WTC11 (cell line): ENCODE measurements at regions of chr15 and their contacts with region 1.

Region 1: GRCh38 chr15:68672781-68673205 is 94.0 kb downstream of the CORO2B start:
- DNase-seq: peak; percentile 49
- ATAC-seq: peak; percentile 71
- H3K4me3 Mint-ChIP-seq: no peak overlapping the region
- H3K27ac Mint-ChIP-seq: no peak overlapping the region
- H3K4me1 Mint-ChIP-seq: peaks cover 11% of the 10 kb centered on the region
- H3K27me3 Mint-ChIP-seq: no peaks in the 10 kb centered on the region
- CTCF ChIP-seq: no peak

Region 2: DNA sequence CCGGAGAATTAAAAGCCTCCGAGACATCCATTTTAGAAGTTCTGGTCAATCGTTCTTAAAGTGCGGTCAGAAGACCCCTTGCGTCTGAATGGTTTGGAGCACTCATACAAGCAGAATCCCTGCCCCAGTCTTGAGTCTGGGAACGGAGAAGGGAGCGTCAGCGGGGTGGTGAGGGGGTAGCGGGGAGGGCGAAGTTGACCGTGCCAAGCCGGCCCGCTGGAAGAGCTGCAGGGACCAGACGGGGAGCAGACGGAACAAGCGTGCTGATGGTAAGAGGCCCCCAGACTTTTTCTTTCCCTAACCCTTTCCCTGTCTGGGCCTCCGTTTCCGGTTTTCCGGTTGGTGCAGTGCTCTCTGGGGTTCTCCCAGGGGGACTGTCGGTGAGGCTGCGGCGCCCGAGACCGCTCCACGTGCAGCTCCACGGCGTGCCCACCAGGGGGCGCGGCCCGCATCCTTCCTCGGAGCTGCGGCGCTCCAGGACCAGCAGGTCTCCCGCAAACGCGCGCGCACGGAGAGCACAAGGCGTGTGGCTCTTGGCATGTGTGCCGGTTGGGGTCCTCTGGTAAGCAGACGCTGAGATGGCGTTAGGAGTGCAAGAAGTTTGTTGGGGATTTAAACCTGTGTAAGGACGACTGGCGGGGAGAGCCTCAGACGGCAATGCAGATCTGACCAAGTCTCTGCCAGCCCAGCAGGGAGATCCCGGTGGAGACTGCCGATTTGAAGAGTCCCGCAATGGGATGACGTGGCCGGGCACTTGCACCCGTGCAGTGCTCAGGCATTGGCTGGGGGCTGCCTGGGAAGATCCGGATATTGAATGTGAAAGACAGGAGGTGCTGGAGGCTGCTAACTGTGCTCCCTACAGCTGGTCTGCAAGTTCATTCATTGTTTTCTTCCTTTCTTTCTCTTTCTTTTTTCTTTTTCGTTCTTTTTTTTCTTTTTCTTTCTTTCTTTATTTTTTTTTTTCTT is 113.2 kb before region 1 on chr15:
- CTCF ChIA-PET with region 1: interaction called, 174 read pairs
- POLR2A ChIA-PET with region 1: interaction called, 3 read pairs
- DNase-seq: peak; percentile 89
- ATAC-seq: peak; percentile 85
- H3K4me3 Mint-ChIP-seq: peak overlapping the region; percentile 94
- H3K27ac Mint-ChIP-seq: peak overlapping the region; percentile 72
- H3K4me1 Mint-ChIP-seq: peaks cover 29% of the 10 kb centered on the region
- H3K27me3 Mint-ChIP-seq: peaks cover 20% of the 10 kb centered on the region
- CTCF ChIP-seq: peak; percentile 91

Region 3: GRCh38 chr15:68599560-68600071 is 73.2 kb before region 1 on chr15:
- CTCF ChIA-PET with region 1: interaction called, 11 read pairs
- POLR2A ChIA-PET with region 1: no interaction called
- DNase-seq: peak; percentile 80
- ATAC-seq: peak; percentile 83
- H3K4me3 Mint-ChIP-seq: peak overlapping the region; percentile 20; the same call in 1 of the 2 replicates
- H3K27ac Mint-ChIP-seq: no peak overlapping the region
- H3K4me1 Mint-ChIP-seq: peaks cover 62% of the 10 kb centered on the region
- H3K27me3 Mint-ChIP-seq: peaks cover 8% of the 10 kb centered on the region
- CTCF ChIP-seq: no peak

Region 4: DNA sequence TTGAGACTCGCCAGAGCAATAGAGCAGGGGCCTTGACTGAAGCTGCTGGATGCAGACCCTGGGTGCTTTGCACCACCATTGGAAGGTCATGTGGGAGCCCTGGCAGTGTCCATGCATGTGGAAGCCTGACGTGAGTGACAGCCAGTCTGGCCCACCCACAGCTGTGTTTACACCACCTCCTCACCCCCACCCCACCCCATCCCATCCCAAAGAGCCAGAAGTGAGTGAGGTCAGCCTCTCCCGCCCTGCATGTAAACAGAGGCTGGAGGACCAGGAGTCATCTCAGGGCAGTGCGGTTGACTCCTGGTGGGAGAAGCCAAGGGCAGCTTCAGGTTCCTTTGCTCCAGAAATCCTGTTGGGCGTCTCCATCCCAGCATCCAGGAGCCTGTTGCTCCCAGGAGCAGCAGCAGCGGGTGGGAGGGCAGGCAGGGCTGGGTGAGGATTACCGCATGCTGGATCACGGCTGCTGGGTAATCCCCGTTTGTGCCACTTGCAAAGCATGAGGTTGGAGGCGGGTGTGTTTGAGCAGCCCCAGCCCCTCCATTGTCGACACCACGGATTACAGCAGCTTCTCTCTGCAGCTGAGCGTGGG is 49.4 kb before region 1 on chr15:
- CTCF ChIA-PET with region 1: interaction called, 26 read pairs
- POLR2A ChIA-PET with region 1: no interaction called
- DNase-seq: no peak
- ATAC-seq: no peak
- H3K4me3 Mint-ChIP-seq: no peak overlapping the region
- H3K27ac Mint-ChIP-seq: no peak overlapping the region
- H3K4me1 Mint-ChIP-seq: peaks cover 24% of the 10 kb centered on the region
- H3K27me3 Mint-ChIP-seq: no peaks in the 10 kb centered on the region
- CTCF ChIP-seq: no peak

Region 5: GRCh38 chr15:68658151-68658550 is 14.6 kb before region 1 on chr15:
- CTCF ChIA-PET with region 1: interaction called, 120 read pairs
- POLR2A ChIA-PET with region 1: no interaction called
- DNase-seq: no peak
- ATAC-seq: no peak
- H3K4me3 Mint-ChIP-seq: no peak overlapping the region
- H3K27ac Mint-ChIP-seq: no peak overlapping the region
- H3K4me1 Mint-ChIP-seq: peaks cover 29% of the 10 kb centered on the region
- H3K27me3 Mint-ChIP-seq: no peaks in the 10 kb centered on the region
- CTCF ChIP-seq: no peak

Region 6: DNA sequence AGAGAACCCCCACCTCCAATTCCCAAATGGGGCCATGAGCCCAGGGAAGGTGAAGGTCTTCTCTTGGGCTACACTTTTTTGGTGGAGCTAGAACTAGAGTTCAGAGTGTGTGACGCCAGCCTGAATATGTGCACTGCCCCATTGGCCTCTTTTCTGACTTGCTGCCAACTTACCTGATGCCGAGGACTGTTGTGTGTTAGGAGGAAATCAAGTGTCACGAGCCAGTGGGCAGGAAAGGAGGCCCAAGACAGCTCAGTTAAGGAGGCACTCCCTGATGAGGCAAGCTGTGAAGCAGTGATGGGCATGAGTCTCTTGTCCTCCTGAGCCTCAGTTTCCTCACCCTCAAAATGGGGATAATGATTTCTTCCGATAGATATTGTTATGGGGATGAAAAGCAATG is 40.1 kb after region 1 on chr15:
- CTCF ChIA-PET with region 1: interaction called, 15 read pairs
- POLR2A ChIA-PET with region 1: no interaction called
- DNase-seq: no peak
- ATAC-seq: no peak
- H3K4me3 Mint-ChIP-seq: no peak overlapping the region
- H3K27ac Mint-ChIP-seq: no peak overlapping the region
- H3K4me1 Mint-ChIP-seq: no peaks in the 10 kb centered on the region
- H3K27me3 Mint-ChIP-seq: no peaks in the 10 kb centered on the region
- CTCF ChIP-seq: no peak

Region 7: DNA sequence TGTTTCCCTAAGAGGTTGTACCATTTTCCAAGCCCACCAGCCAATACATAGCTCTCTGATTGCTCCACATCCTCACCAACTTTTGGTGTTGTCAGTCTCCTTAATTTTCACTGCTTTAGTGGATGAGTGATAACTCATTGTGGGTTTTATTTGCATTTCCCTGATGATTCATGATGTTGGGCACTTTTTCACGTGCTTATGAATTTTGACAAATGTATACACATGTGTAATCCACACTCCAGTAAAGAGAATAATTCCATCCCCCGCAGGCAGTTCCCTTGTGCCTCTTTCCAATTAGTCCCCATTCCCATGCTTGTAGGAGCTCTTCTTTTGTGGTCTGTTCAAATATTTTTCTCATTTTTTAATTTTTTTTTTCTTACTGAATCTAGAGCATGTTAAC is 95.5 kb after region 1 on chr15:
- CTCF ChIA-PET with region 1: no interaction called
- POLR2A ChIA-PET with region 1: no interaction called
- DNase-seq: no peak
- ATAC-seq: no peak
- H3K4me3 Mint-ChIP-seq: no peak overlapping the region
- H3K27ac Mint-ChIP-seq: no peak overlapping the region
- H3K4me1 Mint-ChIP-seq: no peaks in the 10 kb centered on the region
- H3K27me3 Mint-ChIP-seq: peaks cover 8% of the 10 kb centered on the region; the same call in 1 of the 2 replicates
- CTCF ChIP-seq: no peak

Region 8: DNA sequence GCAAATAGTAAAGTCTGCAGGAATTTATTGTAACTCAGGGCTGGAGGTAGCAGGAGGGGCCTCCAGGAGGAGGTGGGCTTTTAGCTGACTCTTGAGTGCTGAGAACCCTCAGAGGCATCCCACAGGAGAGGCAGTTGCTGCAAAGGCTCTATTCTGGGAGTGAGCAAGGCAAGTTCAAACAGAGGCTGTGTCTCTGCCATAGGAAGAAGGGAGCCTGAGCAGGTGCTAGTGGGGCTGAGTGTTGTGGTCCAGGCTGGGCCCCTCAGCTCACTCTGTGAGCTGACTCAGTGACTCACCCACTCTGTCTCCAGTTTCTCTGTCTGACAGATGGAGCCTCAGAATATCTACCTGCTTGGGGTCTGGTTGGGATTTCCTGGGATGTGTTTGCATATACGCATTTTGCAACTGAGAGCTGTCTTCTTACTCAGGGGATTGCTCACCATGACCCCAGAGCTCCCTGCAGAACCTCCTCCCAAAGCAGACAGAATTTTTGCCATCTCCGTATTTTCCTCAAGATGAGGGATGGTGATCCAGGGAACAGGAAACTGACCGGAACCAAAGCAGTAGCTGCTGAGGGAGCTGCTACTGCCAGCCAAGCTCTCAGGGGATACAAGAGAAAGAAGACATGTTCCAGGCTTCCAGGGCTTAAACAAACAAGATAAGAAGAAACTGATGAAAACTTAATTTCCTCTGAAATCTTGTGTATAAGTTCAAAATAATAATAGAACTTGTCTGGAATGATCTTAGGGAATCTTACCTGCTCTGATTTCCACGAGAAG is 328.1 kb after region 1 on chr15:
- CTCF ChIA-PET with region 1: no interaction called
- POLR2A ChIA-PET with region 1: no interaction called
- DNase-seq: no peak
- ATAC-seq: peak; percentile 46
- H3K4me3 Mint-ChIP-seq: no peak overlapping the region
- H3K27ac Mint-ChIP-seq: no peak overlapping the region
- H3K4me1 Mint-ChIP-seq: peaks cover 40% of the 10 kb centered on the region
- H3K27me3 Mint-ChIP-seq: no peaks in the 10 kb centered on the region
- CTCF ChIP-seq: no peak

Region 9: DNA sequence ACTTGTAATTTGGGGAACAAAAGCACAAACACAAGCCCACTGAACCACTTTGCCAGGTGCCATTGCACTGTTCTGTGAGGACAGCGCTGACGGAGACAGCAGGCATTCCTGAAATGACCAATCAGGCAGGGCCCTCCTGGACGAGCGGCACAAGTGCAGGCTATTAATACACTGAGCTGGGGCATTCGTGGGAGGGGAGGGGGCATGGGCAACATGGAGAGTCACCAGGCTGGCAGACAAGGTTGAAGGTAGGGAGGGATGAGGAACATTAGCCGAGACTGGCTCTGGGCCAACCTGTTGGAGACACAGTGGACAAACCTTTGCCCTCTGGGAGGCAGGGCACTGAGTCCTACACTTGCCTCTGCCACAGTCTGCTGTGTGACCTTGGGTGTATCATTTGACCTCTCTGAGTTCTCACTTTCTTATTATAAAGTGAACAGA is 387.3 kb after region 1 on chr15:
- CTCF ChIA-PET with region 1: no interaction called
- POLR2A ChIA-PET with region 1: no interaction called
- DNase-seq: no peak
- ATAC-seq: no peak; the same call in 1 of the 2 replicates
- H3K4me3 Mint-ChIP-seq: no peak overlapping the region
- H3K27ac Mint-ChIP-seq: no peak overlapping the region
- H3K4me1 Mint-ChIP-seq: peaks cover 23% of the 10 kb centered on the region
- H3K27me3 Mint-ChIP-seq: peaks cover 7% of the 10 kb centered on the region; the same call in 1 of the 2 replicates
- CTCF ChIP-seq: no peak